Dorsolateral prefrontal cortex (tissue), 120 donors: ENCODE measurements at regions of chr6 and their contacts with region 1.

Region 1: DNA sequence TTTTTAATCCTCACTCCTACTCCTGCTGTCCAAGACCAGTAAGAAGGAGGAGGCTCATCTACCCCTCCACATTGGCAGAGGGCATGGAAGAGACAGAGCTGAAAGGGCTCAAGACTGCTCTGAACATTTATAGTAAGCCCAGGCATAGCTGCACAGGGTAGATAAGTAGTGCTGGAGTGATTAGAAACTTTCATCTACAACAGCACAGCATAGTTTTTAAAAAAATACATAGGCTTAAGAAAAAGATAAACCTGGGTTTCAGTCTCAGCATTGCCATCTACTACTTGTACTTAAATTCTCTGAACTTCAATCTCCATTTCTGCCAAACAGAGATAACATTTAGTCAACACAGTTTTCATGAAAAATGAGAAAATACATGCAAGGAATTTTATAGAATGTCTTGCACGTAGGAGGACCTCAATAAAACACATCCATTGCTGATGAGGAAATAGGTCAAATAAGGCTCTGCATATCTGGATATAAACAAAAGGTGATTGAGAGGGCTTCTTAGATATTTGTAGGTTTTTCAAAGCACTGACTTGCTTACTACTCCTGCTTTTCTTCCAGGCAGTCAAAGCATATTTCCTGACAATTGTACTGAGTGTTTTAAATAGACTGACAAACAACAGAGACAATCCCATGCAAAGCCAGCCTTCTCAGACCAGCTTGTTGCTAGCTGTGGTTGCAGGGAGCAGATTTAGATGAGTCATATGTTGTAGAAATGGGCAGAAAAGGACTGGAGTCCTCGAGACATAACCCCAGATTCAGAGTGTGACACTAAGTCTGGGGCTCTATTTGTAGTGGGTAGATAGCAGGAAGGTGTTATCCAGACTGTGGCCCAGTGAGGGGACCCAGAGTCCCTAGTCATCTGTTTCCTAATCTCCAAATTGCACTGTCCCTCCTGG is 107.4 kb upstream of the TAB2 start:
- DNase-seq: no peak
- H3K4me3 ChIP-seq: no peak overlapping the region
- H3K27ac ChIP-seq: peak overlapping the region in 31 of 59 donors; percentile 0 to 69 (median 24)
- H3K27me3 ChIP-seq: no peaks in the 10 kb centered on the region
- CTCF ChIP-seq: no peak

Region 2: GRCh38 chr6:147958683-147959082 is 1251.4 kb before region 1 on chr6:
- intact Hi-C with region 1: no loop called
- DNase-seq: no peak
- H3K4me3 ChIP-seq: no peak overlapping the region
- H3K27ac ChIP-seq: no peak overlapping the region
- H3K27me3 ChIP-seq: no peaks in the 10 kb centered on the region
- CTCF ChIP-seq: no peak

Region 3: GRCh38 chr6:148915810-148916209 is 294.3 kb before region 1 on chr6:
- intact Hi-C with region 1: no loop called
- DNase-seq: no peak
- H3K4me3 ChIP-seq: no peak overlapping the region
- H3K27ac ChIP-seq: no peak overlapping the region
- H3K27me3 ChIP-seq: no peaks in the 10 kb centered on the region
- CTCF ChIP-seq: no peak

Region 4: GRCh38 chr6:149129371-149130077 is 80.6 kb before region 1 on chr6:
- intact Hi-C with region 1: loop called in 1 of 2 experiments (anchors 10 kb)
- DNase-seq: no peak
- H3K4me3 ChIP-seq: no peak overlapping the region
- H3K27ac ChIP-seq: no peak overlapping the region
- H3K27me3 ChIP-seq: no peaks in the 10 kb centered on the region
- CTCF ChIP-seq: no peak